Dorsolateral prefrontal cortex (tissue), 120 donors: ENCODE measurements at regions of chr4 and their contacts with region 1.

Region 1: DNA sequence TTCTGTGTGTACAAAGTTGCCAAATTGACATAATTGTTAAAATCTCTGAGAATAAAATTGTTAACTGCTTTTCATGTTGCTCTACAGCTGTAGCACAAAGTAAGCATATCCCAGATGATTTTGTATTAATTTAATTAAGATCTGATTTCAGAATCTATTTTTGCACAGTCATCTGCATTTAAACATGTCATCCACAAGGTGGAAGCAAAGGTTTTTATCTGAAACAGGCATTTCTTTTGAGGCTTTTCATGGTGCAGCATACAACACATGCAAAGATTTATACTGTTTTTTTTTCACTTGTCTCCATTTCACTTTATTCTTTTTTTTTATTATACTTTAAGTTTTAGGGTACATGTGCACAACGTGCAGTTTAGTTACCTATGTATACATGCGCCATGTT is 51.2 kb downstream of the GC start:
- DNase-seq: no peak
- H3K4me3 ChIP-seq: no peak overlapping the region
- H3K27ac ChIP-seq: no peak overlapping the region
- H3K27me3 ChIP-seq: peaks cover 0 to 2% (median 0%) of the 10 kb centered on the region in 45 donors
- CTCF ChIP-seq: peak in 53 of 56 donors; percentile 16 to 65 (median 42)

Region 2: GRCh38 chr4:71355045-71355444 is 377.7 kb before region 1 on chr4:
- intact Hi-C with region 1: no loop called
- DNase-seq: no peak
- H3K4me3 ChIP-seq: no peak overlapping the region
- H3K27ac ChIP-seq: no peak overlapping the region
- H3K27me3 ChIP-seq: no peaks in the 10 kb centered on the region
- CTCF ChIP-seq: no peak

Region 3: GRCh38 chr4:71472946-71473345 is 259.8 kb before region 1 on chr4:
- intact Hi-C with region 1: no loop called
- DNase-seq: no peak
- H3K4me3 ChIP-seq: no peak overlapping the region
- H3K27ac ChIP-seq: no peak overlapping the region
- H3K27me3 ChIP-seq: no peaks in the 10 kb centered on the region
- CTCF ChIP-seq: no peak

Region 4: GRCh38 chr4:72286185-72286584 is 553.5 kb after region 1 on chr4:
- intact Hi-C with region 1: loop called in 1 of 2 experiments (anchors 10 kb)
- DNase-seq: no peak
- H3K4me3 ChIP-seq: no peak overlapping the region
- H3K27ac ChIP-seq: no peak overlapping the region
- H3K27me3 ChIP-seq: no peaks in the 10 kb centered on the region
- CTCF ChIP-seq: peak in 48 of 56 donors; percentile 15 to 57 (median 32)